Right cardiac atrium (tissue), 5 donors: ENCODE measurements at regions of chr18 and their contacts with region 1.

Region 1: GRCh38 chr18:74652392-74652988 is 54.8 kb downstream of the ZNF407 start:
- DNase-seq: no peak
- ATAC-seq: no peak
- H3K4me3 ChIP-seq: no peak overlapping the region
- H3K27ac ChIP-seq: no peak overlapping the region
- H3K4me1 ChIP-seq: no peaks in the 10 kb centered on the region
- H3K27me3 ChIP-seq: no peaks in the 10 kb centered on the region

Region 2: DNA sequence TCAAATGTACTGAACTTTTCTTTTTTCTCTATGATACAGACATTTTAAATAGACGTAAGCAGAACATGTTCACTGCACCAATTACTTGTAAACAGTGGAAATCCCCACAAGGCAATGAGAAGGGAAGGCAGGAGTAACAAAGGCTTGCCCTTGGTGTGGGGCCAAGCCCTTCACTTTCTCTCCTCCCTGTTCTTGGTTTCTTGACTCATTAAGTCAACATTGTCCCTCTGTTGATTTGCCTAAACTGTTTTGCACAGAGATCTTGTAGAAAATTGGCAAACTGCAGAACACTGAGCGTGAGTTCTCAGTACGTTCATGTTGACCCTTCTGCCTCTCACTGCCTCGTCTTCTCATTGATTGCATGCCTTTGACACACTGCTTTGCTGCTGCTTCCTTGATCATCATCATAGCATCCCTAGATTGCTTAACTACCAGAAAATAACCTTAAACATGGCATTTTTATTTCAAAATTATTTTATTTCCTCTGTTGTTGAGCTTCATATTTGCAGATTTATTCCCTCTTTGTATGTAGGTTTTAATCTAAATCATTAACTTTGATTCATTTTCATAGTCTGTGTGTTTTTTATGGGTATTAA is 298.8 kb after region 1 on chr18:
- intact Hi-C with region 1: no loop called
- DNase-seq: peak; percentile 56 to 80 (median 61)
- ATAC-seq: peak; percentile 92 to 97
- H3K4me3 ChIP-seq: no peak overlapping the region
- H3K27ac ChIP-seq: no peak overlapping the region
- H3K4me1 ChIP-seq: peaks cover 6% of the 10 kb centered on the region
- H3K27me3 ChIP-seq: no peaks in the 10 kb centered on the region

Region 3: DNA sequence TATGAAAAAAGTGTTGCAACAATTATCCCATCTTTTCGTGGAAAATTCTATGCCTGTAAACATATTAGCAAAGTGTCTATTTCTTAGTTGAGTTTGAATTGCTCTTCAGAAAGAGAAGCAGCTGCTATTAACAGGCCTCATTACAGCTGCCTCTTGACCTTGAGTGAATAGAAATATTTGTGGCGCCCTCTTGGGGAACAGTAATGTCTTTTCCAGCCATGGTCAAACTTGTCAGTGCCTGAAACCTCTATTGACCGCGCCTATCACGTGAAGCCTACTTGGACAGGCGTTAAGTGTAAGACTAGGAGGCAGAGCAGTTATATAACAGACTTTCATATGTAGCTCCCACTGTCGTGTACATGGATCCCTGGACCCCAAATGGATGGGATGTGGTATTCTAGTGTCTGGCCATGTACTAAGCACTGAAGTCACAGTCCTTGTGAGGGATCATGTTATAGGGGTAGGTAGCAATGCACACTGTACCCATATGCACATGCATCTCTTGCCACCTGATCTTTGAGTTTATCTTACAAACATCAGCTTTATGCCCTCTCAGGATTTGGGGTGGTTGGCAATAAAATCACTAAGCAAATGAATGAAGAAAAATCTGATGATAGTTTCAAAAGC is 311.4 kb after region 1 on chr18:
- intact Hi-C with region 1: loop called in 1 of 4 experiments (anchors 10 kb)
- DNase-seq: peak in 1 of 3 donors; percentile 42
- ATAC-seq: peak; percentile 79 to 82
- H3K4me3 ChIP-seq: no peak overlapping the region
- H3K27ac ChIP-seq: no peak overlapping the region
- H3K4me1 ChIP-seq: no peaks in the 10 kb centered on the region
- H3K27me3 ChIP-seq: no peaks in the 10 kb centered on the region

Region 4: GRCh38 chr18:75478996-75479880 is 826.7 kb after region 1 on chr18:
- intact Hi-C with region 1: loop called (anchors 5 to 10 kb)
- DNase-seq: no peak
- ATAC-seq: peak; percentile 78
- H3K4me3 ChIP-seq: no peak overlapping the region
- H3K27ac ChIP-seq: no peak overlapping the region
- H3K4me1 ChIP-seq: no peaks in the 10 kb centered on the region
- H3K27me3 ChIP-seq: no peaks in the 10 kb centered on the region